IMR-90 (cell line): ENCODE measurements at regions of chr7 and their contacts with region 1.

Region 1: DNA sequence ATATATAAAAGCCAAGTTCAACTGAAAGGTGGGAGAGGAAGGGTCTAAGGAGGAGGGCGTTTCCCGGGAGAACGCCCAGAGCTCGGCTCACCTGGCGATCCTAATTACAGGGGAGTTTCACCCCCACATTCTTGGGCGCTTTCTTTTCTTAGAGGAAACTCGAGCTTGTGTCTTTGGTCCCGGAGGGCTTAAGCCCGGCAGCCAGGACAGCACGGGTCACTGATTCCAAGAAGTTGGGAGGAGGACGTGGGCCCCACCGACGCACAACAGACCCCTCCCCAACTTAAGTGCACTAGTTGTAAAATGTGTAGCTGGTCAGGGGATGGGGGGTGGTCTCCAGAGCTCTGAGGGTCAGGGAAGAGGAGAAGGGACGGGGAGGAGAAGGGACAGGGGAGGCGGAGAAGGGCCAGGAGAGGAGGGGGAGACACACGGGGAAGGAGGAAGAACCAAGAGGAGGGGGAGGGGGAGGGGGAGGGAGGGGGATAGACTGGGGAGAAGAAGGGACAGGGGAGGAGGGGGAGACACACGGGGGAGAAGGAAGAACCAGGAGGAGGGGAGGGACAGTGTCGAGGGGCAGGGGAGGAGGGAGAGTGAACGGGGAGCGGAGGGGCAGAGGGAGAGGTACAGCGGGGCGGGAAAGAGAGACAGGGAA is 874 bp downstream of the BAIAP2L1 start:
- DNase-seq: peak; percentile 17
- ATAC-seq: no peak; the same call in 1 of the 2 replicates
- H3K4me3 ChIP-seq: peak overlapping the region; percentile 95
- H3K27ac ChIP-seq: peak overlapping the region; percentile 92
- H3K4me1 ChIP-seq: peaks cover 9% of the 10 kb centered on the region
- H3K27me3 ChIP-seq: no peaks in the 10 kb centered on the region; the same call in 1 of the 2 replicates
- CTCF ChIP-seq: no peak
- POLR2A ChIP-seq: no peak
- RAD21 ChIP-seq: no peak

Region 2: DNA sequence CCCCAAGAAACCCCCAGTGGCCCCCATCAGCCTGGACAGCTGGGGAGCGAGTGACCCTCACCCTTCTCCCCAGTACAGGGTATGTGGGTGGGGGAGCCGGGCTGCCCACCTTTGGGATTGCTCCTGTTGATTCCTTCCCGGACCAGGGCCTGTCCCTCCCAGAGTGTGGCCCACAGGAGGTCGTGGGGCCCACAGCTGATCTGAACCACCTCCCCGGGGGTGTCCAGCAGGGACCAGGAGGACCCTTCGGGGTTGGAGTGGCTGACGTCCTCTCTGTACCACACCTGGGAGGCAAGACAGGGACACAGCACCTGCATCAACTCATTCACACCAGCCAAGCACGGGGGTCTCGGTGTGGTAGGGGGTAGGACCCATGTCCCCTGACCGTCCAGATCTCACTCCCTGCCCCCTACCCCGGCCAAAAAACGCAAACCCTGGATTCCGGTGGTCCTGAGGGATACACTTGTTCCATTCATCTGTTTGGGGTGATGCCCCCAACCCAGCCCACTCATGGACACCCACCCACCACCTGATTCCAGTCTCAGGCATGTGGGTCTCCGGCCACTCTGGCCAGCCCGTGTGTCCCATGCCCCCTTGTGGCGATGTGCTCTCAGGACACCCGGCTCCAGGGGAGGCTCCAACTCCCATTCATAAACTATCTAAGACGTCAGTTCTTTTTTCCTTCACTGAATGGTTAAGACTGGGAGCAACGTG is 158.9 kb before region 1 on chr7:
- CTCF ChIA-PET with region 1: no interaction called
- POLR2A ChIA-PET with region 1: no interaction called
- dilution Hi-C with region 1: no loop called
- in situ Hi-C with region 1: no loop called
- intact Hi-C with region 1: no loop called
- DNase-seq: peak; percentile 28
- ATAC-seq: peak; percentile 95
- H3K4me3 ChIP-seq: no peak overlapping the region
- H3K27ac ChIP-seq: no peak overlapping the region
- H3K4me1 ChIP-seq: no peaks in the 10 kb centered on the region
- H3K27me3 ChIP-seq: no peaks in the 10 kb centered on the region
- CTCF ChIP-seq: peak; percentile 69
- POLR2A ChIP-seq: no peak
- RAD21 ChIP-seq: peak; percentile 62

Region 3: DNA sequence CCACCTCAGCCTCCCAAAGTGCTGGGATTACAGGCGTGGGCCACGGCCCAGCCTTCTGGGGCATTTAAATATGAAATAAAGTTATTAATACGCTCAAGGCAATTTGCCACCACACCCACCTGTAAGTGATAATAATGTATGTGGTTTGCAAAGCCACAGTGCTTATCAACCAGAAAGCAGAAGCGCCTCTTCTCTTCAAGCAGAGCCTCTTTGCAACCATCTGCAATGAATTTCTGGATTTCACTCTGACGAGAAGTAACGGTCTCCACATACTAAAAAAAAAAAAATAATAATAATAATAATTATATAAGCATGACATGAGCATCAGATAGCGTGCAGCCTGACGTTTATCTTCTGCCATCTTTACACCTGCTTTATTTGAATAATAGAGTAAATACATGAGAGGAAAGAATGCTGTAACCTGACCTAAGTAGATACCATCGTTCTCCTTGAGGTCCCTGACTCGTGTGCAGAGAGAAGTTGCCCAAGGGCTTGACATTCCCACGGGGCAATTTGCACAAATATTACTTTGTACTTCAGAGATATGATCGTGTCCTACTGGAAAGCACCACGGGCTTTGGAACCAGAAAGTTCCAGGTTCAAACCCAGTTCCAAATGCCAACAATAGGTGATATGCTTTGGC is 84.6 kb before region 1 on chr7:
- CTCF ChIA-PET with region 1: no interaction called
- POLR2A ChIA-PET with region 1: no interaction called
- dilution Hi-C with region 1: no loop called
- in situ Hi-C with region 1: no loop called
- intact Hi-C with region 1: loop called (anchors 5 kb)
- DNase-seq: no peak
- ATAC-seq: no peak
- H3K4me3 ChIP-seq: no peak overlapping the region
- H3K27ac ChIP-seq: no peak overlapping the region
- H3K4me1 ChIP-seq: peaks cover 2% of the 10 kb centered on the region; the same call in 1 of the 2 replicates
- H3K27me3 ChIP-seq: no peaks in the 10 kb centered on the region
- CTCF ChIP-seq: no peak
- POLR2A ChIP-seq: no peak
- RAD21 ChIP-seq: no peak